Right ventricle myocardium superior (tissue), 1 donor: ENCODE measurements at regions of chr17 and their contacts with region 1.

Region 1: GRCh38 chr17:43994272-43995149 is 9.9 kb upstream of the NAGS start:
- DNase-seq: peak; percentile 71
- ATAC-seq: peak; percentile 94

Region 2: DNA sequence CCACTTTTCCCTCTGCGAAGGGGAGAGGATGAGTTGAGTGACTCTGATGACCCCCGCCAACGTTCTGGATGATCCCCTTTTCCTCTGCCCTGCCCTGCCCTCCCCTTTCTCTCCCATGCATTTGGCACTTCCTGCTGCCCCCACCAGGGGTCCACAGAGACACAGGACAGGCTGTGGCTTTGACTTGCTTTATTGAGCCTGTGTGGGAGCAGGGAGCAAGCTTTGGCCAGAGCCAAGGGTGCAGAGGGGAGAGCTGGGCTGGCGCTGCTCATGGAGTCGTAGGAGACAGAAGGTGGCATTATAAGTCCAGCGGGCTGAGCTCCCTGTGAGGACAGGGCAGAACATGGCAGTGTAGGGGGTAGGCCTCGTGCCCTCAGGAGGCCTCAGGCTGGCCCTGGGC is 53.9 kb before region 1 on chr17:
- intact Hi-C with region 1: loop called (anchors 5 kb)
- DNase-seq: no peak
- ATAC-seq: peak; percentile 32